ENCODE measurements at regions of chr21 and their contacts with region 1.

Region 1: DNA sequence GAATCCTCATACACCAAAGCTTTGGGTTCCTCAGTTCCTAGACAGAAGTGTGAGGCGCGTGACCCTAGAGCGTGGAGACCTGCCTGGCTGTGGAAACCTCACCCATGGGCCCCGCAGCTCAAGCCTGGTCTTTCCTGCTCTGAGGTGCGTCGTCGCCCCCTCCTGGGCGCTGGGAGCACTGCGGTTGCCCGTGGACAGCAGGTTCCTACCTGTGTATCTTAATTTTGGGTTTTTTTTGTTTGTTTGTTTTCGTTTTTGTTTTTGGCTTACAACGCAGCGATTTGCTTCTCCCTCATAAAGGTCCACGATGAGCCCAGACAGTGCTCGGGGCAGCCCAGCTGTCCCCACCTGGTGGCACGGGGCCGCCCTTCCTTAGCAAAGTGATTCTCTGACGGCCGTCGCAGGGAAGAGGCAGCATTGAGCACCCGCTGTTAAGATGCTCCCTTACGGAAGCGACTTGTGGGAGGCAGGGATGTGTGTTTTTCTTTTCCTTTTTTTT is 36.6 kb upstream of the TRAPPC10 start:
- DNase-seq: peak; percentile 75
- H3K4me3 Mint-ChIP-seq: no peak overlapping the region
- H3K27ac Mint-ChIP-seq: peak overlapping the region; percentile 63
- H3K4me1 Mint-ChIP-seq: peaks cover 10% of the 10 kb centered on the region
- H3K27me3 Mint-ChIP-seq: no peaks in the 10 kb centered on the region

Region 2: DNA sequence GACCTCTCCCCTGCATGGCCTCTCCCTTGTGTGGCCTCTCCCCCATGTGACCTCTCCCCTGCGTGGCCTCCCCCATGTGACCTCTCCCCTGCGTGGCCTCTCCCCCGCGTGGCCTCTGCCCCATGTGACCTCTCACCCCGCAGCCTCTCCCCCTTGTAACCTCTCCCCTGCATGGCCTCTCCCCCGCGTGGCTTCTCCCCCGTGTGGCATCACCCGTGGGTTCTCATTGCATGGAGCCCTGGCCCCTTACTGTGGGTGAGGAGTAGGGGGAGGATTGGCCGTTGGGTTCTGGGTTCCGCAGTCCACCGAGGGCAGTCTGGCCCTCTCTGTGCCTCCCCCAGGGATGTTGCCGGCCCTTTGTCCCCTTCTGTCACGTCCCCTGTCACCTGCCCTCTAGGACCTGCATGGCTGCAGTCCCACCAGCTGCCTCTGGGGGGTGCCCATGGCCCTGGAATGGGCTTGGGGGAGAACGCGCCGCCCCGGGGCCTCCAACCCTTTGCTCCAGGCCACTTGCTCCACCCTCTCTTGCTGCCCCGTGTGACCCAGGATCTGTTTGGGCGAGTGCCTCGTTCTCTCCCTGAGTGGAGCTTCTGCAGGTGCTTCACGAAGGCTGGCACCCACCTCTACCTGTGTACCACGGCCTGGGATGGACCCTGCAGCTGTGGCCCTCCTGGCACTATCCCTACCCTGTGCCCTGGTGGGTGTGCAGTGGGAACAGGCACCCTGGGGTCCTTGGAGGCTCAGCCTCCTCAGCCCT is 164.9 kb before region 1 on chr21:
- intact Hi-C with region 1: loop called (anchors 1 kb)
- DNase-seq: peak; percentile 85
- H3K4me3 Mint-ChIP-seq: no peak overlapping the region
- H3K27ac Mint-ChIP-seq: peak overlapping the region; percentile 4
- H3K4me1 Mint-ChIP-seq: peaks cover 11% of the 10 kb centered on the region
- H3K27me3 Mint-ChIP-seq: no peaks in the 10 kb centered on the region

Measured in activated T-helper 2 cell treated with anti-CD3 and anti-CD28 coated beads, Interferon-gamma antibody, Interleukin-2, Interleukin-4, amounts not matched to agents 10 μg/mL and 5 μg/mL and 100 μg/mL, durations not matched to agents 14 hours and 24 hours and 36 hours (primary cell).